ENCODE measurements at regions of chr20 and their contacts with region 1.

Region 1: GRCh38 chr20:51639206-51639832 is 96.8 kb upstream of the NFATC2 start:
- DNase-seq: peak; percentile 70
- ATAC-seq: peak; percentile 81
- H3K4me3 ChIP-seq: no peak overlapping the region
- H3K27ac ChIP-seq: no peak overlapping the region
- H3K4me1 ChIP-seq: peaks cover 14% of the 10 kb centered on the region
- H3K27me3 ChIP-seq: no peaks in the 10 kb centered on the region
- CTCF ChIP-seq: peak; percentile 79
- POLR2A ChIP-seq: 0 out of 2 replicates have a peak, but pooled peaks have one; percentile 45
- RAD21 ChIP-seq: peak; percentile 89

Region 2: DNA sequence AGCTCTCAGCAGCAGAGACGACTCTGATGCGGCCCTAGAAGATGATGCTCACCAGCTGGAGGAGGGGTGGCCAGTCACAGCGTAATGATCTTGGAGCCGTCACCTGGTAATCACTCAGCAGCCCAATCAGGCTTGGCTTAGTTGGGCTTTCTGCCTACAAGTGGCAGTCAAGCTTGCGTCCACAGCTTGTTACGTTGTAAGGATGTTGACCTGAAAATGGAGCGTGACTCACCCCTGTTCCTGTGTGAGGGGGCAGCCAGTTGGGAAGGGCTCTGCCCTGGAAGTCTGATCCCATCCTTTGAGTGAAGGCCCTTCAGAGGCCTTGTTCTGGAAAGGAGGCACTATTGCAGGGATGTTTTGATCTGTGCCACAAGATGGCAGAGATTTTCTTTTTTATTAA is 1773.8 kb before region 1 on chr20:
- CTCF ChIA-PET with region 1: no interaction called
- POLR2A ChIA-PET with region 1: no interaction called
- dilution Hi-C with region 1: no loop called
- in situ Hi-C with region 1: no loop called
- intact Hi-C with region 1: no loop called
- DNase-seq: peak; percentile 24
- ATAC-seq: no peak
- H3K4me3 ChIP-seq: no peak overlapping the region
- H3K27ac ChIP-seq: no peak overlapping the region
- H3K4me1 ChIP-seq: peaks cover 2% of the 10 kb centered on the region; the same call in 1 of the 2 replicates
- H3K27me3 ChIP-seq: no peaks in the 10 kb centered on the region
- CTCF ChIP-seq: no peak
- POLR2A ChIP-seq: no peak
- RAD21 ChIP-seq: no peak

Region 3: DNA sequence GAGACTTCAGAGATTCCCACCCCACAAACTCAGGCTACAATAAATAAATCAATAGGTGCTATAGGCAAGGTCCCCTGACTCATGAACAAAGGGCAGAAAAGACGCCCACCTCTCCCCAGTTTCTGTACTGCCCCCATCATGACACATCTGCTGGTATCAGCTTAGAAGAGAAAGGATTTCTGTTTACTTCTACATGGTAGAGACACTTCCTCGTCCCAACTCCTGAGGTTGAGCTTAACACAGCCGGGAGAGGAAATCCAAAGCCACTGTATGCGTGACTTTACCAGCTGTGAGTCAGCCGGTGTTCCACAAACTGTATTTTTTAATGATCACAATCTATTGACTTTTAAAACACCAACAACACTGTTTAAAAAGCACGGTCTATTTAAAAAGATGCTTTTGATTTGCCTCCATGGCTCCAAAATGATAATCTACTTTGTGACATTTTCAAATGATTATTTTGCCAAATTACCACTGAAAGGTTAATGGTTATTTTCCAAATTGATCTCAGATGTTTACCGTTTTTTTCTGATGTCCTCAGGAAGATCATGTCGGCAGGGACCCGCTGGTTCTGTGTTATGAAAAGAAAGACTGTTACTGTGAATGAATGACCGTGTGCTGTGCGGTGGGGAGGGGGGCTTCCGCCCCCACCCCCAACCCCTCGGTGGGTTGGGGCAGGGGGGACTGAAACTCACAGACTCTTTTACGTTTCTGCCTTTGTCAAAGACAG is 56.4 kb after region 1 on chr20:
- CTCF ChIA-PET with region 1: no interaction called
- POLR2A ChIA-PET with region 1: interaction called, 7 read pairs
- dilution Hi-C with region 1: no loop called
- in situ Hi-C with region 1: no loop called
- intact Hi-C with region 1: loop called (anchors 5 kb)
- DNase-seq: peak; percentile 93
- ATAC-seq: peak; percentile 95
- H3K4me3 ChIP-seq: peak overlapping the region; percentile 6; the same call in 1 of the 2 replicates
- H3K27ac ChIP-seq: peak overlapping the region; percentile 90
- H3K4me1 ChIP-seq: peaks cover 13% of the 10 kb centered on the region
- H3K27me3 ChIP-seq: no peaks in the 10 kb centered on the region
- CTCF ChIP-seq: no peak
- POLR2A ChIP-seq: no peak
- RAD21 ChIP-seq: no peak; the same call in 1 of the 2 replicates

Region 4: GRCh38 chr20:51767010-51767558 is 127.8 kb after region 1 on chr20:
- CTCF ChIA-PET with region 1: interaction called, 3 read pairs
- POLR2A ChIA-PET with region 1: no interaction called
- dilution Hi-C with region 1: no loop called
- in situ Hi-C with region 1: loop called (anchors 10 kb)
- intact Hi-C with region 1: loop called (anchors 10 kb)
- DNase-seq: no peak
- ATAC-seq: peak; percentile 39
- H3K4me3 ChIP-seq: peak overlapping the region; percentile 76
- H3K27ac ChIP-seq: no peak overlapping the region
- H3K4me1 ChIP-seq: no peaks in the 10 kb centered on the region
- H3K27me3 ChIP-seq: no peaks in the 10 kb centered on the region
- CTCF ChIP-seq: no peak
- POLR2A ChIP-seq: no peak
- RAD21 ChIP-seq: no peak

Region 5: GRCh38 chr20:51966291-51966971 is 327.1 kb after region 1 on chr20:
- CTCF ChIA-PET with region 1: interaction called, 6 read pairs
- POLR2A ChIA-PET with region 1: no interaction called
- dilution Hi-C with region 1: no loop called
- in situ Hi-C with region 1: no loop called
- intact Hi-C with region 1: loop called (anchors 5 kb)
- DNase-seq: peak; percentile 63
- ATAC-seq: peak; percentile 90
- H3K4me3 ChIP-seq: no peak overlapping the region
- H3K27ac ChIP-seq: no peak overlapping the region
- H3K4me1 ChIP-seq: peaks cover 7% of the 10 kb centered on the region; the same call in 1 of the 2 replicates
- H3K27me3 ChIP-seq: no peaks in the 10 kb centered on the region
- CTCF ChIP-seq: peak; percentile 60
- POLR2A ChIP-seq: no peak
- RAD21 ChIP-seq: peak; percentile 56